CD4-positive, alpha-beta memory T cell (primary cell): ENCODE measurements at regions of chr17 and their contacts with region 1.

Region 1: DNA sequence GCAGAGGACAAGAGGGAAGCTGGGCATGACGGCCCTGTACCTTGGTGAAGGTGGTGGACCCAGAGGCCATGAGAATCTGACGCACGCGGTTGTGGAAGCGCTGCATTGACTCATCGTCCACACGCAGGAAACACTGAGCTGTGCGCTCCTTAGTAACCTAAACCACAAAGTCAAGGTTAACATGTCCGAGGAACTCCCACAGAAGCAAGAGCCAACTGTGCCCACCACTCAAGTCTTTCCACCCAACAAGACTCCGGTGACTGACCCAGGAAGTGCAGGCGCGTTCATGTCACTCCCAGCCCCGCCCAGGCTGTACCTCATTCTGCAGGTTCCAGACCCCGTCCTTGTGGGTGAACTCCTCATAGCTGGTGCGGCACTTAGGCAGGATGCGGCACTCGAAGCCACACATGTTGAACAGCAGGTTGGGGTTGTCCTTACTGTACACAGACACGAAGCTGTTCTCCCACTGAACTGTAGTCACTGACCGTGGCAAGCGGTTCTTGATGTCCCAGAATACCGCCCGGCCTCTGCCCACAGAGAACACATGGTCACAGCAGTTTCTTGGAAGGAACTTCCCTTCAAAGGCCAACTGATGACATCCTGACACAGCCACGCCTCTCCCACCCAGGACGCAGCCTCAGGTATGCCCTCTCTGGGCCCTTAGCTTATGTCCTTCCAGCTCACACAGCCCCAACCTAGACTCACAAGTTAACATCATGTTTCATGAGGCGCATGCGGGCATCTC is 11.5 kb downstream of the PRPF8 start:
- DNase-seq: peak; percentile 21 to 71 (median 42)
- H3K4me3 ChIP-seq: no peak overlapping the region
- H3K4me3 Mint-ChIP-seq: peak overlapping the region in 2 of 8 donors; percentile 13 to 21
- H3K27ac ChIP-seq: peak overlapping the region; percentile 4
- H3K27ac Mint-ChIP-seq: peak overlapping the region in 6 of 7 donors; percentile 37 to 74 (median 62)
- H3K4me1 ChIP-seq: no peaks in the 10 kb centered on the region
- H3K4me1 Mint-ChIP-seq: peaks cover 18 to 37% (median 29%) of the 10 kb centered on the region in 4 donors
- H3K27me3 ChIP-seq: no peaks in the 10 kb centered on the region
- H3K27me3 Mint-ChIP-seq: no peaks in the 10 kb centered on the region

Region 2: GRCh38 chr17:1658100-1658499 is 15.1 kb before region 1 on chr17:
- CTCF ChIA-PET with region 1: interaction called, 10 read pairs
- POLR2A ChIA-PET with region 1: no interaction called
- intact Hi-C with region 1: no loop called
- DNase-seq: no peak
- H3K4me3 ChIP-seq: no peak overlapping the region
- H3K4me3 Mint-ChIP-seq: no peak overlapping the region
- H3K27ac ChIP-seq: no peak overlapping the region
- H3K27ac Mint-ChIP-seq: peak overlapping the region in 1 of 7 donors; percentile 64
- H3K4me1 ChIP-seq: no peaks in the 10 kb centered on the region
- H3K4me1 Mint-ChIP-seq: peaks cover 0 to 3% (median under 1%) of the 10 kb centered on the region in 4 donors
- H3K27me3 ChIP-seq: no peaks in the 10 kb centered on the region
- H3K27me3 Mint-ChIP-seq: no peaks in the 10 kb centered on the region

Region 3: GRCh38 chr17:1684378-1685189 is 11.4 kb after region 1 on chr17 and contains the start of gene PRPF8:
- CTCF ChIA-PET with region 1: interaction called, 19 read pairs
- POLR2A ChIA-PET with region 1: interaction called, 6 read pairs
- intact Hi-C with region 1: no loop called
- DNase-seq: peak; percentile 98 to 99 (median 99)
- H3K4me3 ChIP-seq: peak within 1 kb of the TSS; percentile 83 to 96
- H3K4me3 Mint-ChIP-seq: peak within 1 kb of the TSS; percentile 97 to 99 (median 99)
- H3K27ac ChIP-seq: peak within 1 kb of the TSS; percentile 96
- H3K27ac Mint-ChIP-seq: peak within 1 kb of the TSS; percentile 93 to 100 (median 99)
- H3K4me1 ChIP-seq: peaks cover 29% of the 10 kb centered on the region
- H3K4me1 Mint-ChIP-seq: peaks cover 32 to 56% (median 41%) of the 10 kb centered on the region in 4 donors
- H3K27me3 ChIP-seq: no peaks in the 10 kb centered on the region
- H3K27me3 Mint-ChIP-seq: no peaks in the 10 kb centered on the region
- total RNA-seq, gene PRPF8: 429 to 464 TPM

Region 4: GRCh38 chr17:1727876-1728630 is 54.8 kb after region 1 on chr17:
- CTCF ChIA-PET with region 1: no interaction called
- POLR2A ChIA-PET with region 1: no interaction called
- intact Hi-C with region 1: no loop called
- DNase-seq: no peak
- H3K4me3 ChIP-seq: no peak overlapping the region
- H3K4me3 Mint-ChIP-seq: peak overlapping the region in 1 of 8 donors; percentile 36
- H3K27ac ChIP-seq: no peak overlapping the region
- H3K27ac Mint-ChIP-seq: peak overlapping the region in 2 of 7 donors; percentile 36 to 53
- H3K4me1 ChIP-seq: peaks cover 46% of the 10 kb centered on the region
- H3K4me1 Mint-ChIP-seq: peaks cover 11 to 52% (median 24%) of the 10 kb centered on the region in 4 donors
- H3K27me3 ChIP-seq: no peaks in the 10 kb centered on the region
- H3K27me3 Mint-ChIP-seq: no peaks in the 10 kb centered on the region

Region 5: DNA sequence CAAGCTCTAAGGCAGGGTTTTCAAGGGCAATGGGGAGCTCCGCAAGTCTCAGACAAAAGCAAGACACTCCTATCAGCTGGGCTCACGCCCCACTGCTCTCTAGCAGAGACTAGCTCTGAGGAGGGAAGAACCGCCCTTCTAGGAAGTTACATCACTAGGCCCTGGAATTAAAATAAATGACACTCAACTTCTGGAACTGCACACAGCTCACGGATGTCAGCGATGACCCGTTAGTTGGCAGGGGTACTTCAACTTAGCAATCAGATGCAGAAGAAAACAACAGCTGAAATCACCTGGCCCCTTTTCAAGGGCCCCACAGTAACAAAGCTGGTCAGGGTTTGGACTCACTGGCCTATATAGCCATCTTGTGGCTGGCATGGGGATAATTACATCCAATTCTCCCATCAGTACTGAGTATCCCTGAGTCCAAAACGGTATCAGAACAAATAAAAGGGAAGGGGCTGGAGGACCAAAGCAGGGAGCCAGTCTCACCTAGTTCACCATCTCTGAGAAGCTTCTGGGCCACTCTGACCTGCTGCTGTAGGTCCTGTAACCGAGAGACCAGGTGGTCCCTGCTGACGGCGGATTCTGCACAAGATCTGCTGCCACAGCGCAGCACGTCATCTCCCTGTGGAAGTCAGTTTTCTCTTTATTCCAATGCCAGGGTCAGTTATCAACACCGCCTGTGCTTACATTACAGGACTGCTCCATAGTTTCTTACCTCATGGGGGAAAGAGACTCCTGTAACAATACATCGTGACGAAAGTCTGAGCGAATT is 110.8 kb after region 1 on chr17:
- CTCF ChIA-PET with region 1: interaction called, 14 read pairs
- POLR2A ChIA-PET with region 1: no interaction called
- intact Hi-C with region 1: no loop called
- DNase-seq: peak in 4 of 5 donors; percentile 18 to 37 (median 31)
- H3K4me3 ChIP-seq: no peak overlapping the region
- H3K4me3 Mint-ChIP-seq: no peak overlapping the region
- H3K27ac ChIP-seq: no peak overlapping the region
- H3K27ac Mint-ChIP-seq: peak overlapping the region in 4 of 7 donors; percentile 10 to 74 (median 48)
- H3K4me1 ChIP-seq: no peaks in the 10 kb centered on the region
- H3K4me1 Mint-ChIP-seq: peaks cover 0 to 10% (median 1%) of the 10 kb centered on the region in 4 donors
- H3K27me3 ChIP-seq: no peaks in the 10 kb centered on the region
- H3K27me3 Mint-ChIP-seq: no peaks in the 10 kb centered on the region

Region 6: DNA sequence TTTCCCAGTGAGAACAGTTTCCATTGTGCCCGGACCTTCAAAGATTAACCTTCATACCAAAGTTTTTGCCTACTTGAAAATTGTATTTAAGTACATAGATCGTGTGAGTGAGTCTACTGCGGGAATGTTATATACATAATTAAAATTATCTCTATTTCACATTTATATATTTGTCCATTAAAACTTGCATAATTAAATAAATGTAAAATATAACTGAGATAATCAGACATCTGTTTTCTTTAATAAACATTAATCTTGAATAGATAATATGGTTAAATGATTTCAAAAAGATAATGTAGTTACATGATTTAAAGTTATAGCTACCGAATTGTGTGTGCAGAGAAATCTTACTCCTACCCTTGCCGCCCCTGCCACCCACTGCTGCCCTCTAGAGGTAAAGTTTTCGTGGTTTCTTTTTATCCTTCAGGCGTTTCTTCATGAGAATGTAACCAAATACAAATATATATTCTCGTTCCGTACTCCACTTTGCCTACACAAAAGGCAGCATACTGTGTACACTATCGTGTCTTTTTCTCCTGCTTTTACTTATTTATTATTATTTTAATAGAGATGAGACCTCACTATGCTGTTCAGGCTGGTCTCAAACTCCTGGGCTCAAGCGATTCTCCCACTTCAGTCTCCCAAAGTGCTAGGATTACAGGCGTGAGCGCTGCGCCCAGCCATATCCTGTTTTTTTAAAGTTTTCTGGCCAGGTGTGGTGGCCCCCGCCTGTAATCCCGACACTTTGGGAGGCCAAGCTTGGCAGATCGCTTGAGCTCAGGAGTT is 192.2 kb after region 1 on chr17:
- CTCF ChIA-PET with region 1: interaction called, 12 read pairs
- POLR2A ChIA-PET with region 1: no interaction called
- intact Hi-C with region 1: loop called (anchors 1 kb)
- DNase-seq: peak; percentile 53 to 68 (median 64)
- H3K4me3 ChIP-seq: no peak overlapping the region
- H3K4me3 Mint-ChIP-seq: no peak overlapping the region
- H3K27ac ChIP-seq: no peak overlapping the region
- H3K27ac Mint-ChIP-seq: peak overlapping the region in 1 of 7 donors; percentile 12
- H3K4me1 ChIP-seq: peaks cover 17% of the 10 kb centered on the region
- H3K4me1 Mint-ChIP-seq: peaks cover 13 to 25% (median 20%) of the 10 kb centered on the region in 4 donors
- H3K27me3 ChIP-seq: no peaks in the 10 kb centered on the region
- H3K27me3 Mint-ChIP-seq: no peaks in the 10 kb centered on the region

Region 7: GRCh38 chr17:2041561-2042366 is 368.6 kb after region 1 on chr17 and contains the start of gene OVCA2:
- CTCF ChIA-PET with region 1: interaction called, 3 read pairs
- POLR2A ChIA-PET with region 1: no interaction called
- intact Hi-C with region 1: loop called (anchors 5 kb)
- DNase-seq: peak; percentile 96 to 98 (median 97)
- H3K4me3 ChIP-seq: peak within 1 kb of the TSS; percentile 64 to 79
- H3K4me3 Mint-ChIP-seq: peak within 1 kb of the TSS; percentile 90 to 94 (median 92)
- H3K27ac ChIP-seq: peak within 1 kb of the TSS; percentile 85
- H3K27ac Mint-ChIP-seq: peak within 1 kb of the TSS; percentile 89 to 98 (median 96)
- H3K4me1 ChIP-seq: peaks cover 24% of the 10 kb centered on the region
- H3K4me1 Mint-ChIP-seq: peaks cover 6 to 32% (median 14%) of the 10 kb centered on the region in 4 donors
- H3K27me3 ChIP-seq: no peaks in the 10 kb centered on the region
- H3K27me3 Mint-ChIP-seq: no peaks in the 10 kb centered on the region
- total RNA-seq, gene OVCA2: 27.9 to 36.7 TPM